ENCODE measurements at regions of chr3 and their contacts with region 1.

Region 1: GRCh38 chr3:94062431-94063404 is at the starts of genes DHFR2 and NSUN3:
- DNase-seq: peak; percentile 98
- ATAC-seq: peak; percentile 99
- H3K4me3 ChIP-seq: peak within 1 kb of the TSS; percentile 72 to 88 (median 79)
- H3K27ac ChIP-seq: peak within 1 kb of the TSS; percentile 98
- H3K4me1 ChIP-seq: peaks cover 24% of the 10 kb centered on the region
- H3K27me3 ChIP-seq: no peaks in the 10 kb centered on the region; a peak in 1 of 5 replicates
- CTCF ChIP-seq: no peak
- EP300 ChIP-seq: no peak
- POLR2A ChIP-seq: peak; percentile 74 to 77
- RAD21 ChIP-seq: 0 out of 2 replicates have a peak, but pooled peaks have one; percentile 10
- total RNA-seq, gene DHFR2: 3.1 and 4.6 TPM in 2 replicates
- total RNA-seq, gene NSUN3: 10.6 and 12.4 TPM in 2 replicates

Region 2: GRCh38 chr3:93906245-93906644 is 156.5 kb before region 1 on chr3:
- CTCF ChIA-PET with region 1: no interaction called
- POLR2A ChIA-PET with region 1: no interaction called
- in situ Hi-C with region 1: no loop called
- intact Hi-C with region 1: loop called (anchors 10 kb)
- DNase-seq: no peak
- ATAC-seq: peak; percentile 43
- H3K4me3 ChIP-seq: no peak overlapping the region
- H3K27ac ChIP-seq: no peak overlapping the region
- H3K4me1 ChIP-seq: no peaks in the 10 kb centered on the region
- H3K27me3 ChIP-seq: no peaks in the 10 kb centered on the region
- CTCF ChIP-seq: no peak
- EP300 ChIP-seq: no peak
- POLR2A ChIP-seq: no peak
- RAD21 ChIP-seq: no peak

Region 3: GRCh38 chr3:93973131-93974126 is 89.3 kb before region 1 on chr3 and contains the start of gene PROS1:
- CTCF ChIA-PET with region 1: no interaction called
- POLR2A ChIA-PET with region 1: interaction called, 34 read pairs
- in situ Hi-C with region 1: no loop called
- intact Hi-C with region 1: loop called (anchors 2 kb)
- DNase-seq: peak; percentile 85
- ATAC-seq: peak; percentile 95
- H3K4me3 ChIP-seq: peak within 1 kb of the TSS; percentile 77 to 84 (median 81)
- H3K27ac ChIP-seq: peak within 1 kb of the TSS; percentile 91
- H3K4me1 ChIP-seq: peaks cover 14% of the 10 kb centered on the region
- H3K27me3 ChIP-seq: no peaks in the 10 kb centered on the region; a peak in 1 of 5 replicates
- CTCF ChIP-seq: peak; percentile 41; the same call in 1 of the 2 replicates
- EP300 ChIP-seq: peak in 1 of 2 experiments; percentile 1; a peak in 1 of 4 replicates
- POLR2A ChIP-seq: peak; percentile 60 to 66
- RAD21 ChIP-seq: peak; percentile 31; the same call in 1 of the 2 replicates
- total RNA-seq, gene PROS1: 45.6 and 76.8 TPM in 2 replicates

Region 4: DNA sequence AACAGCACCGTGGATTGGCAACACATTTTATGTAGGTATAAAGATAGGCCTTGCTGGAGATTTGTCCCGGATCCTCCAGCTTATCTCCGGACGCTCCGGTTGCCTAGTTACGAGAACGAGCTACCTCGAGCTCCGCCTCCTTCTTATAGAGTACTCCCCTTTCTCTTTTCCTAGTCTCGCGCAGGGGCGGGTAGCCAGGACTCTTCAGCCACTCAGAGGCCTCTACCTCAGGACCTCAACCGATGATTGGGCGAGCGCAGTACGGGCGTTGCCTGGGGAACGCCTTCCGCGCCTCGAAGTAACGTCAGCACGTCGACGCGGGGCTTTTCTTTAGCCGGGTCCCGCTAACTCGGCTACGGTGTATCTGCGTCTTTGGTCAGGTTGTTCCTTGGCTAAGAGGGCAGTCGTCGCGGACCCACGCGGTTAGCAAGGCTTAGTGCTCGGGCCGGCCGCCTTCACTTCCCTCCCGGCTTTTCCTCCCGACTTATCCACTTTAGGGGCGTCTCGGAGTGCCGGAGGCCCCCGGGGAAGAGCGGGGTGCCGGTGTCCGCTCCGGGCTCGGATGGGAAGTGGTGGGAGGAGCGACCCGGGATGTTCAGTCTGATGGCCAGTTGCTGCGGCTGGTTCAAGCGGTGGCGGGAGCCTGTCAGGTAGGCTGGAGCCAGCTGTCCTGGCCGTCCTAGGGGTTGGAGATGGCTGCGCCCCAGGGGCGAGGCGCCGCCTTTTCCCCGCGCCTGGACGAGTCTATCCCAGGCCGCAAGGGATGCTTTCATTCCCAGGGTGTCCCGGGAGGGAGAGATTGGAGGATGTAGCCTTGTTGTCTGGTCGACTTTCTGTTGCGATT is 82.7 kb before region 1 on chr3 and contains the start of gene ARL13B:
- CTCF ChIA-PET with region 1: no interaction called
- POLR2A ChIA-PET with region 1: interaction called, 24 read pairs
- in situ Hi-C with region 1: no loop called
- intact Hi-C with region 1: loop called (anchors 2 kb)
- DNase-seq: peak; percentile 98
- ATAC-seq: peak; percentile 99
- H3K4me3 ChIP-seq: peak within 1 kb of the TSS; percentile 80 to 85 (median 83)
- H3K27ac ChIP-seq: peak within 1 kb of the TSS; percentile 76
- H3K4me1 ChIP-seq: peaks cover 25% of the 10 kb centered on the region
- H3K27me3 ChIP-seq: no peaks in the 10 kb centered on the region
- CTCF ChIP-seq: no peak
- EP300 ChIP-seq: no peak
- POLR2A ChIP-seq: peak; percentile 77 to 79
- RAD21 ChIP-seq: no peak
- total RNA-seq, gene ARL13B: 9.6 and 12.7 TPM in 2 replicates

Region 5: DNA sequence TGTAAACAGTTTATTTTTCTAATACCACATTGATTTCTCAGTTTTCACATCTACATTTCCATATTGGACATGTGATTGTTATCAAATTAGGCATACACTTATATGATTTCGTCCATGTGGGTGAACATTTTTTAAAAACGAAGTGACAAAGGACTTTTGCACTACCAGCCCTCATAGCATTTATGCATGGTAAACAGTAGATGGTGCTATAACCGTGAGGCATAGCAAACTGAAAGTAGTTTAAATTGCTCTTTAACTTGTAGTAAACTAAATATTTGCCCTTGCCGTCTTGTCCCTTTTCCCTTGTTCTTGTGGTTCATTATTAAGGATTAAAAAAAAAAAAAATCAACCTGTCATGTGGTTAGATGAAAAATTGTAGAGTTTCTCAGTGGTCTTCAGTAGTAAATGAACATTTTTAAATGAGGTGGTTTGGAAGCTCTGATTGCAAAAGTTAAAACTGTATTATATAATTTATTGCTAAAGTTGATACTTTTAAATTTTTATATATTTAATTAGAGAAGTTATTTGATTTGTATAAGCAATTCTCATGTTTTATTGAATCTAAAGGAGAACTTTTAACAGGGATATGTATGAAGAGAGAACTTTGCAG is 58.3 kb before region 1 on chr3:
- CTCF ChIA-PET with region 1: interaction called, 25 read pairs
- POLR2A ChIA-PET with region 1: no interaction called
- in situ Hi-C with region 1: loop called (anchors 10 kb)
- intact Hi-C with region 1: loop called (anchors 1 kb)
- DNase-seq: peak; percentile 60
- ATAC-seq: peak; percentile 67
- H3K4me3 ChIP-seq: 0 out of 6 replicates have a peak overlapping the region, but pooled peaks of 1 of the 3 experiments have one; percentile 31
- H3K27ac ChIP-seq: peak overlapping the region; percentile 11
- H3K4me1 ChIP-seq: no peaks in the 10 kb centered on the region
- H3K27me3 ChIP-seq: no peaks in the 10 kb centered on the region
- CTCF ChIP-seq: peak; percentile 81
- EP300 ChIP-seq: no peak
- POLR2A ChIP-seq: no peak
- RAD21 ChIP-seq: no peak

Region 6: DNA sequence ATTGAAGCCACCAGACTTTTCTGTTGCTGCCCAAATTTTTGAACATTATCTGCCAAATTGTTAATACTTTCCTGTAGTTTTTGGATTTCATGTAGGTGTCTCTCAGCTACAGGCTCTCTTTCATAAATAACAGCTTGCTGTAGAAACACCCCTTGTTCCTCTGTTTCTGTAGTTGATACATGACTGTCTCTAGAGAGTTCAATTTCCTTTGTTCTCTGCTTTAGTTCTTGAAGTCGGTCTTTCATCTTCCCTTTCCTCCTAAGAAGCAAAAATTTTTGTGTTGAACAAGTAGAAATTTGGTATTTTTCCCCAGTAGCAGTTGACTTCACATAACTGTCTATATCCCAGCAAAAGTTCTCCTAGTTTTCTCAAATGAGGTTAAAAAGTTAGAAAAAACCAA is 47.7 kb before region 1 on chr3:
- CTCF ChIA-PET with region 1: no interaction called
- POLR2A ChIA-PET with region 1: no interaction called
- in situ Hi-C with region 1: no loop called
- intact Hi-C with region 1: no loop called
- DNase-seq: no peak
- ATAC-seq: no peak
- H3K4me3 ChIP-seq: no peak overlapping the region
- H3K27ac ChIP-seq: no peak overlapping the region
- H3K4me1 ChIP-seq: no peaks in the 10 kb centered on the region
- H3K27me3 ChIP-seq: no peaks in the 10 kb centered on the region
- CTCF ChIP-seq: no peak
- EP300 ChIP-seq: no peak
- POLR2A ChIP-seq: no peak
- RAD21 ChIP-seq: no peak

Region 7: DNA sequence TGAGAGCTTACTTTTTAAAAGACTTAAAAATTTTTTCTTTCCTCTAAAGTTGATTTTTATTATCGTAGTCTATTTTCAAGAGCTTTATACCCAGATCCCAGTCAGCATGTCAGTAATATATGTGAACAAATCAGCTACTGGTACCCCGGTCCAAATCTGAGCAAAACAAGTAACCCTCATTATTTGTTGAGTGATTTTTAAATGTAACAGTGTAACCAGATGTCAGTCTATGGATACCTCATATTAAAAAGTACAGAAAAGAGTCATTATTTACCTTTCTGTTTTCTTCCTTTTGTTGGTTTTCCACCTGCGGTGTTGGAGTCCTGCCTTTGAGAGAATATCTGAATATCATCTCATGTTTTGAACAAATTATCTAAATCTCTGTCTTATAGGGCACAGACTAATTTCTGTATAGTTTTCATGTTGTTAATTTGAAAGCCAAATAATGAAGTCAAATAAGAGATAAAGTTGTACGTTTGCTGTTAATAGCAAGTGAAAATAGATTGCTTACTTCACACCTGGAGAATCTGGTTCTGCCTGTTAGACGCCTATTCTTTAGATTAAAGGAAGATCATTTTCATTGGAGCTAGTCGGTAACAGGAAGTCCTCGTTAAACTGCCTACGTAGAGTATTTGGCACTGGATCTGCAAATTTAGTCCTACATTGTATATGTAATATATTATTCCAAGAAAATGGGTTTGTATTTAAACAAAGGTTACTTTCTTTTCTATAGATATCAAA is 34.5 kb before region 1 on chr3 and contains the start of gene STX19:
- CTCF ChIA-PET with region 1: no interaction called
- POLR2A ChIA-PET with region 1: no interaction called
- in situ Hi-C with region 1: no loop called
- intact Hi-C with region 1: loop called (anchors 2 kb)
- DNase-seq: no peak
- ATAC-seq: no peak
- H3K4me3 ChIP-seq: no peak within 1 kb of the TSS
- H3K27ac ChIP-seq: no peak within 1 kb of the TSS
- H3K4me1 ChIP-seq: no peaks in the 10 kb centered on the region
- H3K27me3 ChIP-seq: no peaks in the 10 kb centered on the region
- CTCF ChIP-seq: no peak
- EP300 ChIP-seq: no peak
- POLR2A ChIP-seq: no peak
- RAD21 ChIP-seq: no peak
- total RNA-seq, gene STX19: not detected in 2 replicates

Measured in HepG2 (cell line).